Activated B cell treated with CpG ODN at 0.5 μM for 24 hours (primary cell): ENCODE measurements at regions of chr9 and their contacts with region 1.

Region 1: DNA sequence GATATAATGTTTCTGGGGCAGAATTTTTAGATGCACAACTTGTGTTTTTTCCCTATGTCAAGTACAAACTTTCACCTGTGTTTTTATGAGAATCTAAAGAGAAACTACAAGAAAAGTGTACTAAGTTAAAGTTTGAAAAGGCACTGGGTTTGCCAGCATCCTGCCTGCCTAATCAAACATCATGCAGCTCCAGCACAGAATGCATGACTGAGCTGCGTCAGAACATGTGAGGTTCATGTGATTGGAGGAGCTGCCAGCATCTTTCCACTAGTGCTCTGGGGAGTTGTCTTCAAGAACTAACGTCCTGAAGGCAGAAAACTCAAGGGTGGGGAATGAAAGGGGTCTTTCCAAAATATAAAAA is 46.1 kb upstream of the RIC1 start:
- DNase-seq: peak; percentile 45
- ATAC-seq: peak; percentile 62
- H3K4me3 Mint-ChIP-seq: peak overlapping the region; percentile 71
- H3K27ac Mint-ChIP-seq: peak overlapping the region; percentile 99
- H3K4me1 Mint-ChIP-seq: peaks cover 89% of the 10 kb centered on the region
- H3K27me3 Mint-ChIP-seq: no peaks in the 10 kb centered on the region
- CTCF ChIP-seq: no peak

Region 2: DNA sequence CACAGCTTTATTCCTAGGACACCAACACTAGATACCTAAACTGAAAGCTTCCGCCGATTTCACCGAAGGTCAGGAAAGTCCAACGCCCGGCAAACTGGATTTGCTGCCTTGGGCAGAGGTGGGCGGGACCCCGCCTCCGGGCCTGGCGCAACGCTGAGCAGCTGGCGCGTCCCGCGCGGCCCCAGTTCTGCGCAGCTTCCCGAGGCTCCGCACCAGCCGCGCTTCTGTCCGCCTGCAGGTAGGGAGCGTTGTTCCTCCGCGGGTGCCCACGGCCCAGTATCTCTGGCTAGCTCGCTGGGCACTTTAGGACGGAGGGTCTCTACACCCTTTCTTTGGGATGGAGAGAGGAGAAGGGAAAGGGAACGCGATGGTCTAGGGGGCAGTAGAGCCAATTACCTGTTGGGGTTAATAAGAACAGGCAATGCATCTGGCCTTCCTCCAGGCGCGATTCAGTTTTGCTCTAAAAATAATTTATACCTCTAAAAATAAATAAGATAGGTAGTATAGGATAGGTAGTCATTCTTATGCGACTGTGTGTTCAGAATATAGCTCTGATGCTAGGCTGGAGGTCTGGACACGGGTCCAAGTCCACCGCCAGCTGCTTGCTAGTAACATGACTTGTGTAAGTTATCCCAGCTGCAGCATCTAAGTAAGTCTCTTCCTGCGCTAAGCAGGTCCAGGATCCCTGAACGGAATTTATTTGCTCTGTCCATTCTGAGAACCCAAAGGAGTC is 132.3 kb before region 1 on chr9 and contains the start of gene CD274:
- CTCF ChIA-PET with region 1: interaction called, 90 read pairs
- POLR2A ChIA-PET with region 1: interaction called, 178 read pairs
- intact Hi-C with region 1: loop called (anchors 1 kb)
- DNase-seq: peak; percentile 76
- ATAC-seq: peak; percentile 83
- H3K4me3 Mint-ChIP-seq: peak within 1 kb of the TSS; percentile 95
- H3K27ac Mint-ChIP-seq: peak within 1 kb of the TSS; percentile 96
- H3K4me1 Mint-ChIP-seq: peaks cover 75% of the 10 kb centered on the region
- H3K27me3 Mint-ChIP-seq: no peaks in the 10 kb centered on the region
- CTCF ChIP-seq: no peak
- total RNA-seq, gene CD274: 47.4 and 48.9 TPM in 2 replicates

Region 3: DNA sequence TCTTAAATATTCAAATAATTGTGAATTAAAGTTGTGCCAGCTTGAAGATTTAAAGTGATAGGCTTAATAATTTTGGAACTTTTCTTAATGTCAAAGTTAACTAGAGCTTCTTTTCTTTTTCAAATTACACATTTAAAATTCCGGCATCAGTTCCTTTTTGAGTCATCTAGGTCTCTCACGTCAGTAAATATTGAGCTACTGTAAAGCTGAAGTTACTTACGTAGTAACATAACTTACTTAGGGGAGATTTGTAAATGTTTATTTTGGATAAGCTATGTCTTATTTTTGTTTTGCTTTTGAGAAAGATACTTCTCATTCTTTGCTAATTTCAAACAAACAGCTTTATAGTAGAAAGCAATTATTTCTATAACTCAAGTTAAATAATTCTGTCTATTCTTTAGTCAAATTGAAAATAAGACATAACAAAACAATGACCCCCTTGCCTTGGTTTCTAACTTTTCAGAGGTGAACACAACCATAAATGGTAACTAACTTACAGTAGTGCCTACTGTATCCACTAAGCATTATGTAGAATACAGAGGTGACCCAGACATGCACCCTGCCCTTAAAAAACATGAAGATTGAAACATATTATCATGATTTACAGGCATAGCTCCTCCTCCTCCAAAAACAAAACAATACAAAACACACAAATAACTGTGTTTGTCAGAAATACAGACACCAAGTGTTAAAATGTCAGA is 102.7 kb before region 1 on chr9:
- CTCF ChIA-PET with region 1: no interaction called
- POLR2A ChIA-PET with region 1: interaction called, 16 read pairs
- intact Hi-C with region 1: no loop called
- DNase-seq: no peak
- ATAC-seq: no peak
- H3K4me3 Mint-ChIP-seq: no peak overlapping the region
- H3K27ac Mint-ChIP-seq: no peak overlapping the region
- H3K4me1 Mint-ChIP-seq: peaks cover 33% of the 10 kb centered on the region
- H3K27me3 Mint-ChIP-seq: no peaks in the 10 kb centered on the region
- CTCF ChIP-seq: no peak

Region 4: DNA sequence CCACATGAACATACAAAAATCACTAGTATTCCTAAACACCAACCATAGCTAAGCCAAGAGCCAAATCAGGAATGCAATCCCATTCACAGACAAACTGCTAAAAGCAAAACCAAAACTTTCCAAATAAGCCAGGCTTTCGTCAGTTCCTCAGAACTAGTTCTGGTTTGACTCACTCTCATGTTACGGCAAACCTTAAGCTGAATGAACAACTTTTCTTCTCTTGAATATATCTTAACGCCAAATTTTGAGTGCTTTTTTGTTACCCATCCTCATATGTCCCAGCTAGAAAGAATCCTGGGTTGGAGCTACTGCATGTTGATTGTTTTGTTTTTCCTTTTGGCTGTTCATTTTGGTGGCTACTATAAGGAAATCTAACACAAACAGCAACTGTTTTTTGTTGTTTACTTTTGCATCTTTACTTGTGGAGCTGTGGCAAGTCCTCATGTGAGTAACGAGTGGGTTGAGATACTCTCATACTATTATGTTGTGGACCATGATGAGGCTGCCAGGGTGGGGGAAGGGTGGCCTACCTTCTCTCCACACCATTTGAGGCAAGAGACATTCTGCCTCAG is 72.4 kb before region 1 on chr9 and contains the start of gene PDCD1LG2:
- CTCF ChIA-PET with region 1: no interaction called
- POLR2A ChIA-PET with region 1: interaction called, 18 read pairs
- intact Hi-C with region 1: loop called (anchors 1 kb)
- DNase-seq: no peak
- ATAC-seq: peak; percentile 79
- H3K4me3 Mint-ChIP-seq: peak within 1 kb of the TSS; percentile 77
- H3K27ac Mint-ChIP-seq: peak within 1 kb of the TSS; percentile 89
- H3K4me1 Mint-ChIP-seq: peaks cover 55% of the 10 kb centered on the region
- H3K27me3 Mint-ChIP-seq: no peaks in the 10 kb centered on the region
- CTCF ChIP-seq: no peak
- total RNA-seq, gene PDCD1LG2: 2.1 and 2.8 TPM in 2 replicates

Region 5: GRCh38 chr9:5557606-5558587 is 24.9 kb before region 1 on chr9:
- CTCF ChIA-PET with region 1: interaction called, 4 read pairs
- POLR2A ChIA-PET with region 1: interaction called, 53 read pairs
- intact Hi-C with region 1: loop called (anchors 1 kb)
- DNase-seq: peak; percentile 20
- ATAC-seq: peak; percentile 83
- H3K4me3 Mint-ChIP-seq: peak overlapping the region; percentile 50
- H3K27ac Mint-ChIP-seq: peak overlapping the region; percentile 75
- H3K4me1 Mint-ChIP-seq: peaks cover 55% of the 10 kb centered on the region
- H3K27me3 Mint-ChIP-seq: no peaks in the 10 kb centered on the region
- CTCF ChIP-seq: no peak

Region 6: DNA sequence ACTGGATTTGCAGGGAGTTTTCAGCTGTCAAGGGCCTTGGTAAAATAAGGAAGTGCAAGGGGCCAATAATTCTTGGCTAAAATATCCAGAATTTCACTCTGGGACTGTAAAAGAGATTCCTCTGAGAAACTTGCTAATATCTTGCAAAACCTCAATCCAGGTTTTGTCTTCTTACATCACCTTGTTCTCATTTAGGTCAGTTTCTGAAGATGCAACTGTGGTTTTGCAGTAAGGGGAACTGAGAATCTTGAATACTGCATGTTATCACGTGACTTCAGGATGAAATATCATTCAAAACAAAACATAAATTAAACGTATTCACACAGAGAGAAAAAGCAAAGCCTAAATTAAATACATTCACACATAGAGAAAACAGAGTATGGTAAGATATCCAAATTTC is 11.1 kb after region 1 on chr9:
- CTCF ChIA-PET with region 1: interaction called, 5 read pairs
- POLR2A ChIA-PET with region 1: interaction called, 100 read pairs
- intact Hi-C with region 1: loop called (anchors 1 kb)
- DNase-seq: no peak
- ATAC-seq: peak; percentile 32
- H3K4me3 Mint-ChIP-seq: peak overlapping the region; percentile 70
- H3K27ac Mint-ChIP-seq: peak overlapping the region; percentile 98
- H3K4me1 Mint-ChIP-seq: peaks cover 94% of the 10 kb centered on the region
- H3K27me3 Mint-ChIP-seq: no peaks in the 10 kb centered on the region
- CTCF ChIP-seq: no peak

Region 7: DNA sequence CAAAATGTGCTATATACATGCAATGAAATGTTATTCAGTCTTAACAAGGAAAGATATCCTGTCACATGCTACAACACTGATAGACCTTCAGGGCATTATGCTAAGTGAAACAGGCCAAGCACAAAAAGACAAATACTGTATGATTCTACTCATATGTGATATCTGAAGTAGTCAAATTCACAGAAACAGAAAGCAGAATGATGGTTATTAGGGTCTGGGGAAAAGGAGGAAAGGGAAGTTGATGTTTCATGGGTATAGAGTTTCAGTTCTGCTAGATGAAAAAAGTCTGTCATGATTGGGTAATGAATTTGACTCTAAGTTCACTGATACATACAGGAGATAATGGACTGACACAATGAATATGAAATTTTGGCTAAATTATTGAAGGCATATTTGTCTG is 34.9 kb after region 1 on chr9:
- CTCF ChIA-PET with region 1: no interaction called
- POLR2A ChIA-PET with region 1: no interaction called
- intact Hi-C with region 1: no loop called
- DNase-seq: no peak
- ATAC-seq: peak; percentile 95
- H3K4me3 Mint-ChIP-seq: peak overlapping the region; percentile 45
- H3K27ac Mint-ChIP-seq: peak overlapping the region; percentile 79
- H3K4me1 Mint-ChIP-seq: peaks cover 55% of the 10 kb centered on the region
- H3K27me3 Mint-ChIP-seq: no peaks in the 10 kb centered on the region
- CTCF ChIP-seq: no peak